MCF 10A (cell line): ENCODE measurements at regions of chr15 and their contacts with region 1.

Region 1: DNA sequence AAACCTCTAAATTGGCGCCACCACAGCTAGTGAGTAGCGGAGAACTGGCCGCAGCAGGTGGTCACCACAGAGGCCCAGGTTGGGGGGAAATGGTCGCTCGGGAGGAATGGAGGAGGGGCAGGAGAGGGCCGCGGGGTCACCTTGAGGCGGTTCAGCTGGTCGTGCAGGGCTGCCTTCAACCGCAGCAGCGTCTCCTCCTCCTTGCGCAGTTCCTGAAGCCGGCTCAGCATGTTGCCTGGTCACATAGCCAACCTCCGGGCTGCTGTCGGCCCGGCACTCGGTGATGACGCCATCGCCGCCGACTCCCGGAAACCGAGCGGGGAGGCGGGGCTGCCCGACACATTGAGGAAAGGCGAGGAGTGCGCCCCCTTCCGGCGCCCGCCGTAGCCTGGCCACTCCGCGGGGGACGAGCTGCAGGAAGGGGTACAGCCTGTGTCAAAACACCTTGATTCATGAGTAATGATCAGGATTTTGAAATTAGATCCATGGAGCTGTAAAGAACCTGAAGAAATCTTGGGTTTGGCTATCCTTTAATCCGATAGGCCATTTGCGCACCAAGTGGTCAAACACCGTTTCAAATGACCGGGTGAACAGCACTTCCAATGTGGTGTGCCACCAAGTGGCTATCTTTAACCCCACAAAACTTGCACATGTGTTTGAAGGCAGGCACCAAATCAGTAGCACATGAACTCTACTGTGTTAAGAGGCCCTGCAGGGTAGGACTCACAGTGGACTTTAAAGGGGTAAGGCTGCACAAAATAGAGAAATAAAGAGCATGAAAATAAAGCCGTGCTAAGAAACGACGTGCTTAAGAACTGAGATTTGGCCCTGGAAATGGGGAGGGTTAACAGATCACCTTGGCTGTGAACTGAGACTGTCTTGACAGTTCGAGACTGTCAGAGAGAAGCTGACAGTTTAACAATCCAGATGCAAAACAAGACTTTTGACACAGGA is at the start of gene SNAPC5:
- DNase-seq: peak; percentile 95
- H3K4me3 Mint-ChIP-seq: peak within 1 kb of the TSS; percentile 90
- H3K27ac Mint-ChIP-seq: peak within 1 kb of the TSS; percentile 87
- H3K4me1 Mint-ChIP-seq: peaks cover 13% of the 10 kb centered on the region
- H3K27me3 Mint-ChIP-seq: no peaks in the 10 kb centered on the region
- CTCF ChIP-seq: peak; percentile 92
- total RNA-seq, gene SNAPC5: 22.9 and 24.6 TPM in 2 replicates

Region 2: GRCh38 chr15:65980824-65981456 is 516.8 kb before region 1 on chr15:
- CTCF ChIA-PET with region 1: no interaction called
- POLR2A ChIA-PET with region 1: no interaction called
- intact Hi-C with region 1: loop called (anchors 5 kb)
- DNase-seq: peak; percentile 75
- H3K4me3 Mint-ChIP-seq: no peak overlapping the region
- H3K27ac Mint-ChIP-seq: no peak overlapping the region
- H3K4me1 Mint-ChIP-seq: no peaks in the 10 kb centered on the region
- H3K27me3 Mint-ChIP-seq: peaks cover 35% of the 10 kb centered on the region
- CTCF ChIP-seq: peak; percentile 70

Region 3: GRCh38 chr15:66293419-66294156 is 204.2 kb before region 1 on chr15 and contains the start of gene DIS3L:
- CTCF ChIA-PET with region 1: interaction called, 7 read pairs
- POLR2A ChIA-PET with region 1: interaction called, 28 read pairs
- intact Hi-C with region 1: loop called (anchors 1 kb)
- DNase-seq: peak; percentile 70
- H3K4me3 Mint-ChIP-seq: peak within 1 kb of the TSS; percentile 83
- H3K27ac Mint-ChIP-seq: peak within 1 kb of the TSS; percentile 75
- H3K4me1 Mint-ChIP-seq: peaks cover 11% of the 10 kb centered on the region
- H3K27me3 Mint-ChIP-seq: no peaks in the 10 kb centered on the region
- CTCF ChIP-seq: no peak
- total RNA-seq, gene DIS3L: 35.6 and 42.8 TPM in 2 replicates

Region 4: GRCh38 chr15:66356345-66357236 is 141.2 kb before region 1 on chr15 and contains the start of gene TIPIN:
- CTCF ChIA-PET with region 1: interaction called, 15 read pairs
- POLR2A ChIA-PET with region 1: interaction called, 11 read pairs
- intact Hi-C with region 1: loop called (anchors 1 kb)
- DNase-seq: peak; percentile 95
- H3K4me3 Mint-ChIP-seq: peak within 1 kb of the TSS; percentile 99
- H3K27ac Mint-ChIP-seq: peak within 1 kb of the TSS; percentile 99
- H3K4me1 Mint-ChIP-seq: peaks cover 5% of the 10 kb centered on the region
- H3K27me3 Mint-ChIP-seq: no peaks in the 10 kb centered on the region
- CTCF ChIP-seq: no peak
- total RNA-seq, gene TIPIN: 16.1 and 17.1 TPM in 2 replicates

Region 5: DNA sequence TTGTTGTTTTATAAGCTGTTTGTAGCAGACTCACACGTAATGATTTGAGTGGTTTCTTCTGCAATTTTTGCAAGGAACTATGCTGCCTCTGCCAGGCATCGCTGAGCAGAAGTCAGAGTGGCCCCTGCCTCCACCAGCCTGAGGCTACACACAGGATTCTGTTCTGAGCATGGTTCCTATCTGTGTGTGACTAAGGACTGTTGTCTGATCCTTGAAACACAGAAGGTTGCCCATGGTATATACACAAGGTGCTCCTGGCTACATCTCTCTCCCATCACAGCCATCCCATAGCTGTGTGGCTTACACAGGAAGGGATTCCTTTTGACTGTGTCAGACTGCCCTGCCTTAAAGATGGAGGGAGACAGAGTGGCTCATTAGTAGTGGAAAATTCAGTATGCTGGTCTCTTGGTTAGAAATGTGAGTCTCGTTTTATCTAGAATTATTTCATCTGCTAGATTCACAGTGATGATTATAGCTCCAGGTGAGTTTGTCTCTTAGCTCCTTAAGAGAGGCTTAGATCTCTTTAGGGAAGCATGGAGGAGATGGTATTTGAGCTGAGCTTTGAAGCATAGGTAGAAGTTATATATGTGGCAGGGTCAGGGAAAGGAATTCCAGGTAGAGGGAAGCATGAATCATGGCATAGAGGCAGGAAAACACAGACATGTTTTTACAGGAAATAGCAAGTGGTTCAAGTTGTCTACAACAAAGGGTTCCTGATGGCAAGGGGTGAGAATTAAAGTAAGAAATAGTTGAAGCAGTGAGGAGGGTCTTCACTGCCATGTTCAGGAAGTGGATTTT is 37.8 kb before region 1 on chr15:
- CTCF ChIA-PET with region 1: interaction called, 10 read pairs
- POLR2A ChIA-PET with region 1: interaction called, 9 read pairs
- intact Hi-C with region 1: no loop called
- DNase-seq: peak; percentile 52
- H3K4me3 Mint-ChIP-seq: peak overlapping the region; percentile 16
- H3K27ac Mint-ChIP-seq: peak overlapping the region; percentile 83
- H3K4me1 Mint-ChIP-seq: peaks cover 25% of the 10 kb centered on the region
- H3K27me3 Mint-ChIP-seq: no peaks in the 10 kb centered on the region
- CTCF ChIP-seq: no peak

Region 6: GRCh38 chr15:66472176-66472999 is 25.4 kb before region 1 on chr15:
- CTCF ChIA-PET with region 1: interaction called, 17 read pairs
- POLR2A ChIA-PET with region 1: interaction called, 3 read pairs
- intact Hi-C with region 1: no loop called
- DNase-seq: no peak
- H3K4me3 Mint-ChIP-seq: no peak overlapping the region
- H3K27ac Mint-ChIP-seq: peak overlapping the region; percentile 51
- H3K4me1 Mint-ChIP-seq: no peaks in the 10 kb centered on the region
- H3K27me3 Mint-ChIP-seq: no peaks in the 10 kb centered on the region
- CTCF ChIP-seq: no peak